Left colon (tissue), 2 donors: ENCODE measurements at regions of chr2 and their contacts with region 1.

Region 1: DNA sequence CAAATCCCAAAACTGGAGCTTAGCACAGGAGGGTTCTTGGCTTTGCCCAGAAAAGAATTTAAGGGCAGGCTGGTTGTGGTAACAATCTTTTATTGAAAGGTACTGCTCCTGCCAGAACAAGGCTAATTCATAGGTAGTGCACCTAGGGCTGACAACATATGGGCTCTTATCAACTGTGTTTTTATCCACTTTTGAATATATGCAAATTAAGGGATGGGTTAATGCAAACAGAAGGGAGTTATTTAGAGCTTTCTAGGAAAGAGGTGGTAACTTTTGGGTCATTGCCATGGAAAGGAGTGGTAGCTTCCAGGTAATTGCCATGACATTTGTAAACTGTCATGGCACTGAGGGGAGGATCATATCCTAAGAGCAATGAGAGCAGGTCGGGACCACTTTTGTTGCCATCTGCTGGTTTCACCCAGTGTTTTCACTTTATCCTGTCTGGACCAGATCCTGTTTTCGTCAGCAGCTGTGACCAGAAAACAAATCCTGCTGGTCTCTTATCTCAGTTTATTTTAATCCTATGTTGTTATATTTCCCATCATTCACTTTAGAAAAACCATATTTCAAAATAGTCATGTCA is 981 bp downstream of the C2orf66 start:
- DNase-seq: no peak
- ATAC-seq: no peak

Region 2: DNA sequence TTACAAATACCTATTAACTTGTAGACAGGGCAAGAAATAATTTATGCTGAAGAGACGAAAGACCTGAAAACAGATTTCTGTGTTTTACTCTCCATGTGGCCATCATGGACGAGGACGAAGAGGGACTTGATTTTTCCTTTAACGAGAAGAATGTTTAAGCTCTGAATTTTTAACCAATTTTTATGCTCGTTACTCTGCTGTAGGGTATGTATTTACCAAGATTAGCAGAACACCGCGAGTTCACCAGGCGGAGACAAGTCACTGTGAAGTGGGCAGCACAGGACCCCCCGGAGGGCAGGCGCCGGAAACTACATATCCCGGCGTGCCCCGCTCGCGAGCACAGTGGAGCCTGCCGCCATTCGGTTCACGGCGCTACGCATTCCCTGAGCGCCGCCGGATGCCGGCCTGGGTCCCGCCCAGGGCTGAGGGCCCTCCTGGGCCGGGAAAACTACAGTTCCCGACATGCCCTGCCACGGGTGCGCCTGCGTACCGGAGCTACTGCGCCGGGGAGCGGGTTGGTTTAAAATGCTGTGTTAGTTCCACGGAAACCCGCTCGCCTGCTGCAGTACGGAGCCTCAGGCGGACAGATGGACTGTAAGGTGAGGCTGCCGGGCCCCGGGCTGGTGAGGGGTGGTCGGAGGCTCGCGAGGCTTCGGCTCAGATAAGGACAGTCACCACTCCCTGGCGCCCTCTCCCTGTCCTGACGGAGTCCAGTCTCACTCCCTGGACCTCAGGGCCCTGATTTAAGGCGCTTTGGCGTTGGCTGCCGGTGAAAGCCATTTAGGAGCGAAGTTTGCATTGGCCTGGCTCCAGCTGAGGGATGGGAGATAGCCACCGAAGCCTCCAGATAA is 168.8 kb before region 1 on chr2 and contains the start of gene CCDC150:
- intact Hi-C with region 1: loop called in 1 of 2 experiments (anchors 10 kb)
- DNase-seq: peak; percentile 90 to 95
- ATAC-seq: peak; percentile 100
- total RNA-seq, gene CCDC150: 1.6 to 5.8 TPM

Region 3: DNA sequence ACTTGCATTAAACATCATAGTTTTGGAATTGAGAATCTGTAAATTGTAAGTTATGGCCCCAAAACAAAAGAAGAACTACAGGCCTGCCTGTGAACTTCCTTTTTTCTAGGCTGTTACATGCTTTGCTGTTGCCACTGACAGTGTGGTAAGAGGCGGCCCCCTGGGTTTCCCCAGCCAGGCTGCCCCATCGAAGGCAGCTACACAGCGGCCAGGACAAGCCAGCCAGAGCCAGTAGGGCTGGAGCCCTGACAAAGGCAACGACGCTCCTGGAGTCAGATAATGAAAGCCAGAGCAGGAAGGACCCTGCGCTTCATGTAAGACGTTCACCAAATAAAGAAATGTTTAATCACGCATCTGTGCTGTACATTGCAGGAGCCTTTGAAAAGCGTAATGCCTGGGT is 447.4 kb after region 1 on chr2:
- intact Hi-C with region 1: no loop called
- DNase-seq: peak; percentile 65 to 68
- ATAC-seq: peak; percentile 57

Region 4: GRCh38 chr2:198591586-198591985 is 1783.4 kb after region 1 on chr2:
- intact Hi-C with region 1: no loop called
- DNase-seq: no peak
- ATAC-seq: no peak